B cell (primary cell): ENCODE measurements at regions of chrX and their contacts with region 1.

Region 1: GRCh38 chrX:54639346-54640102 is 109.5 kb downstream of the GNL3L start:
- DNase-seq: peak; percentile 94
- ATAC-seq: peak; percentile 85
- H3K4me3 ChIP-seq: peak overlapping the region; percentile 61 to 71 (median 66)
- H3K4me3 Mint-ChIP-seq: peak overlapping the region; percentile 96
- H3K27ac ChIP-seq: peak overlapping the region; percentile 98
- H3K27ac Mint-ChIP-seq: peak overlapping the region; percentile 99
- H3K4me1 ChIP-seq: peaks cover 0 to 12% of the 10 kb centered on the region in 2 donors
- H3K4me1 Mint-ChIP-seq: peaks cover 10% of the 10 kb centered on the region
- H3K27me3 ChIP-seq: no peaks in the 10 kb centered on the region
- H3K27me3 Mint-ChIP-seq: no peaks in the 10 kb centered on the region
- CTCF ChIP-seq: peak; percentile 59

Region 2: GRCh38 chrX:53683556-53684414 is 955.7 kb before region 1 on chrX:
- CTCF ChIA-PET with region 1: no interaction called
- POLR2A ChIA-PET with region 1: no interaction called
- intact Hi-C with region 1: loop called (anchors 1 kb)
- DNase-seq: peak; percentile 96
- ATAC-seq: peak; percentile 70
- H3K4me3 ChIP-seq: peak overlapping the region; percentile 65 to 77 (median 69)
- H3K4me3 Mint-ChIP-seq: peak overlapping the region; percentile 94
- H3K27ac ChIP-seq: peak overlapping the region; percentile 95 to 98
- H3K27ac Mint-ChIP-seq: peak overlapping the region; percentile 99
- H3K4me1 ChIP-seq: peaks cover 21 to 26% of the 10 kb centered on the region in 2 donors
- H3K4me1 Mint-ChIP-seq: peaks cover 39% of the 10 kb centered on the region
- H3K27me3 ChIP-seq: no peaks in the 10 kb centered on the region
- H3K27me3 Mint-ChIP-seq: no peaks in the 10 kb centered on the region
- CTCF ChIP-seq: no peak

Region 3: DNA sequence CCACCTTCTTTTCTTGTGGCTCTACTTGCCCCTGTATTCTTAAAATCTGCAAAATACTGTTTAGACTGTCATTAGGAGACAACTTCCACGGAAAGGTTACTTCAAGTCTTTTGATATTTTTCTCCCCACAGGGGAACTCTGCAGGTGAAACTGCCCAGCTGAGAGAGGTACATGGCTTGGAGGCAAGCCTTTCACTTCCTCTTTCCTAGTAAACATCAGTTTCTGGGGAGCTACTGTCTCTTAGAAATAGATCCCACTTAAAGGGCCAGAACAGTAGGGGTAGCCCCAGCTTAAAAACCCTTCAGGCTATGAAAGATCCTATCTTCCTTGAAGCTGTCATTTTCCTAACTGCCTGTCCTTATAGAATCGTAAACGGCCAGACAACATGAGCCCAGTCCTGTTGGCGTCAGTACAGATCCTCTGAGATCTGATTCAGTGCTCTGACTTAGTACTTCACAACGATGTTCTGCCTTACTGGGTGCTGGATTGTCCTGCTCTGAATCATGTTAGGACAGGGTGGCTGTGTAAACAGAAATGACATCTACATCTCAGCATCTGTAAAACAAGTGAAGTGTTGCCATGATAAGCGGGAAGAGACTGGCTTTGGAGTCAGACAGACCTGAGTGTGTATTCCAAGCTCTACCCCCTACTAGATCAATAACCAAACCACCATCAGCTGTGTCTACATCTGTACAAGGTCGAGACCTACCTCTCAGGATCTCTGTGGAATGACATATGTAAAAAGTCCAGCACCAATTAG is 56.5 kb after region 1 on chrX:
- CTCF ChIA-PET with region 1: no interaction called
- POLR2A ChIA-PET with region 1: no interaction called
- intact Hi-C with region 1: loop called (anchors 5 kb)
- DNase-seq: peak; percentile 54
- ATAC-seq: peak; percentile 80
- H3K4me3 ChIP-seq: no peak overlapping the region
- H3K4me3 Mint-ChIP-seq: peak overlapping the region; percentile 29
- H3K27ac ChIP-seq: no peak overlapping the region
- H3K27ac Mint-ChIP-seq: peak overlapping the region; percentile 72
- H3K4me1 ChIP-seq: peaks cover 14% of the 10 kb centered on the region in 2 donors
- H3K4me1 Mint-ChIP-seq: peaks cover 19% of the 10 kb centered on the region
- H3K27me3 ChIP-seq: peaks cover 0 to 1% (median 0%) of the 10 kb centered on the region in 4 experiments
- H3K27me3 Mint-ChIP-seq: no peaks in the 10 kb centered on the region
- CTCF ChIP-seq: no peak

Region 4: GRCh38 chrX:54999717-55000598 is 360.4 kb after region 1 on chrX and contains the start of gene APEX2:
- CTCF ChIA-PET with region 1: interaction called, 3 read pairs
- POLR2A ChIA-PET with region 1: interaction called, 8 read pairs
- intact Hi-C with region 1: loop called (anchors 5 kb)
- DNase-seq: peak; percentile 91
- ATAC-seq: peak; percentile 94
- H3K4me3 ChIP-seq: peak within 1 kb of the TSS; percentile 71 to 75 (median 73)
- H3K4me3 Mint-ChIP-seq: peak within 1 kb of the TSS; percentile 97
- H3K27ac ChIP-seq: peak within 1 kb of the TSS; percentile 85 to 86
- H3K27ac Mint-ChIP-seq: peak within 1 kb of the TSS; percentile 95
- H3K4me1 ChIP-seq: peaks cover 7 to 20% of the 10 kb centered on the region in 2 donors
- H3K4me1 Mint-ChIP-seq: peaks cover 27% of the 10 kb centered on the region
- H3K27me3 ChIP-seq: no peaks in the 10 kb centered on the region
- H3K27me3 Mint-ChIP-seq: no peaks in the 10 kb centered on the region
- CTCF ChIP-seq: no peak
- total RNA-seq, gene APEX2: 13.1 and 19.6 TPM in 2 replicates

Region 5: DNA sequence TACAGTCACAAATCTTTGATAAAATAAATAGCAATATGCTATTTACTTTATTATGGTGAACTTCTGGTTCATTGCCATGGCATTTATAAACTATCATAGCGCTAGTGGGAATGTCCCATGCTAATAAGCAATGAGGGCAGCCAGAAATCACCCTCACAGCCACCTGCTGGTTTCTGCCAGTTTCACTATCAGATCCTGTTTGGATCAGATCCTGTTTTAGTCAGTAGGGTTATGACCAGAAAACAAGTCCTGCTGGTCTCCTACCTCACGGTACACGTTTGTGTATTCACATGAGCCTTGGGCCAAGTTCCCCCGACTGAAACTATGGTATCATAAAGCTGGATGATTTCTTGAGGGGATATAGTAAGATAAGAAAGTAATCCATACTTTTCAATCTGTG is 1001.3 kb after region 1 on chrX:
- CTCF ChIA-PET with region 1: no interaction called
- POLR2A ChIA-PET with region 1: no interaction called
- intact Hi-C with region 1: loop called (anchors 10 kb)
- DNase-seq: peak; percentile 28
- ATAC-seq: no peak
- H3K4me3 ChIP-seq: no peak overlapping the region
- H3K4me3 Mint-ChIP-seq: no peak overlapping the region
- H3K27ac ChIP-seq: no peak overlapping the region
- H3K27ac Mint-ChIP-seq: no peak overlapping the region
- H3K4me1 ChIP-seq: peaks cover 0 to under 1% of the 10 kb centered on the region in 2 donors
- H3K4me1 Mint-ChIP-seq: peaks cover 11% of the 10 kb centered on the region
- H3K27me3 ChIP-seq: no peaks in the 10 kb centered on the region
- H3K27me3 Mint-ChIP-seq: no peaks in the 10 kb centered on the region
- CTCF ChIP-seq: no peak